Heart left ventricle (tissue), 16 donors: ENCODE measurements at regions of chr20 and their contacts with region 1.

Region 1: DNA sequence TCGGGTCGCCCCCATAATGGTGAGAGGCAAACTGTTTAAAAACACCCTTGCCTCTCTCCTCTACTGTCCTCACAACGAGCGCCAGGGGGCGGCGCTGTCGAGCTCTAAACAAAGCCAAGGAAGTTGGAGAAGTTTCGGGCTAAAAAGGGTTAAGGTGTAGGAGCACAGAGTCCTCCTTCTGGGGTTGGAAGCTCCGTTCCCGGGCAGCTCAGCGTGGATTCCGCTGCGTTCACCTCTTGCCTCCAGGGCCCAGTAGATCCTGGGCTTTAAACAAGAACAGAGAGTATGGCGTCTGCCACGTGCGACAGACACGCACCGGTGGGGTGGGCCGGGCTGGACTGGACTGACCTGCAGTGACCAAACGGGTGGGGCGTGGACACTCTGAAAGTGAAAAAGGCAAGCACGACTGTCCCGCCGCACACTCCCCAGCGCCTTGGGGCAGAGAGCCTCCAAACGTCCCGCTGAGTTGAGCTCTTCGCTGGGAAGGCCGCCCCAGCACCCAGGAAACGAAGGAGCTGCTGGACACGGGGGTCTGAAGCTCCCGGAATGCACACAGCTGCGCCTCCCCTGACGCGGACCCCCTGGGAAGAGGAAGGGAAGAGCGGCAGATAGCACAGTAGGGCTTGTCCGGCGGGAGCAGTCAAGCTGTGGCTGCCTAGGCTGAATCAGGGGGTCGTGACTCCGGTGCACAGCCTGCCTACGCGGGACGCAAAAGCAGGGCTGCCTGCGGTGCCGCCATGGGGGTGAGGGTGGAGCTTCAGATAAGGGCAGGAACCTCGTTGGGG is 1.6 kb upstream of the THBD start:
- DNase-seq: peak; percentile 79 to 91 (median 88)
- ATAC-seq: peak; percentile 52 to 74 (median 61)
- H3K4me3 ChIP-seq: peak overlapping the region; percentile 50 to 88 (median 69)
- H3K27ac ChIP-seq: peak overlapping the region; percentile 74 to 97 (median 90)
- H3K4me1 ChIP-seq: peaks cover 0 to 55% (median 27%) of the 10 kb centered on the region in 12 donors
- H3K27me3 ChIP-seq: peaks cover 0 to 48% (median 12%) of the 10 kb centered on the region in 9 donors
- CTCF ChIP-seq: peak; percentile 60 to 86 (median 76)
- POLR2A ChIP-seq: no peak

Region 2: GRCh38 chr20:22700367-22700766 is 350.7 kb before region 1 on chr20:
- intact Hi-C with region 1: loop called in 1 of 10 experiments (anchors 5 kb)
- DNase-seq: no peak
- ATAC-seq: no peak
- H3K4me3 ChIP-seq: no peak overlapping the region
- H3K27ac ChIP-seq: no peak overlapping the region
- H3K4me1 ChIP-seq: peaks cover 0 to 15% (median under 1%) of the 10 kb centered on the region in 12 donors
- H3K27me3 ChIP-seq: no peaks in the 10 kb centered on the region
- CTCF ChIP-seq: no peak
- POLR2A ChIP-seq: no peak

Region 3: GRCh38 chr20:22861229-22861980 is 189.6 kb before region 1 on chr20:
- intact Hi-C with region 1: loop called in 7 of 10 experiments (anchors 1 to 10 kb)
- DNase-seq: no peak
- ATAC-seq: no peak
- H3K4me3 ChIP-seq: no peak overlapping the region
- H3K27ac ChIP-seq: peak overlapping the region in 11 of 12 donors; percentile 24 to 87 (median 63)
- H3K4me1 ChIP-seq: peaks cover 0 to 20% (median 4%) of the 10 kb centered on the region in 12 donors
- H3K27me3 ChIP-seq: no peaks in the 10 kb centered on the region
- CTCF ChIP-seq: no peak
- POLR2A ChIP-seq: no peak

Region 4: GRCh38 chr20:23086056-23086566 is 35.1 kb after region 1 on chr20 and contains the start of gene CD93:
- intact Hi-C with region 1: loop called in 3 of 10 experiments (anchors 2 kb)
- DNase-seq: peak; percentile 64 to 78 (median 76)
- ATAC-seq: peak; percentile 59 to 83 (median 74)
- H3K4me3 ChIP-seq: peak within 1 kb of the TSS; percentile 27 to 70 (median 60)
- H3K27ac ChIP-seq: peak within 1 kb of the TSS; percentile 81 to 99 (median 97)
- H3K4me1 ChIP-seq: peaks cover 0 to 54% (median 25%) of the 10 kb centered on the region in 12 donors
- H3K27me3 ChIP-seq: no peaks in the 10 kb centered on the region
- CTCF ChIP-seq: no peak
- POLR2A ChIP-seq: peak in 1 of 2 donors; percentile 53
- total RNA-seq, gene CD93: 29.6 to 110 (median 45.7) TPM

Region 5: DNA sequence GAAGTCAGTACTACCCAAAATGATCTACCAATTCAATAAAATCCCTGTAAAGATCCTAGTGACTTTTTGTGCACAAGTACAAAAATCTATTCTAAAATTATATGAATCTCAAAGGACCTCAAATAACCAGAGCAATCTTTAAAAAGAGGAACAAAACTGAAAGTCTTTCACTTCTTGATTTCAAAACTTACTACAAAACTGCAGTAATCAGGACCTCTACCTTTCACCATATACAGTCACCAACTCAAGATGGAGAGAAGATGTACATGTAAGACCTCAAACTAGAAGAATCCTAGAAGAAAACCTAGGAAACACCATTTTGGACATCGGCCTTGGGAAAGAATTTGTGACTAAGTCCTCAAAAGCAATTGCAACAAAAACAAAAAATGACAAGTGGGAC is 144.6 kb after region 1 on chr20:
- intact Hi-C with region 1: loop called in 5 of 10 experiments (anchors 5 to 10 kb)
- DNase-seq: no peak
- ATAC-seq: no peak
- H3K4me3 ChIP-seq: no peak overlapping the region
- H3K27ac ChIP-seq: no peak overlapping the region
- H3K4me1 ChIP-seq: peaks cover 0 to 20% (median 0%) of the 10 kb centered on the region in 12 donors
- H3K27me3 ChIP-seq: no peaks in the 10 kb centered on the region
- CTCF ChIP-seq: no peak
- POLR2A ChIP-seq: no peak

Region 6: GRCh38 chr20:23245553-23246181 is 194.6 kb after region 1 on chr20:
- intact Hi-C with region 1: loop called in 1 of 10 experiments (anchors 5 kb)
- DNase-seq: peak; percentile 67 to 80 (median 71)
- ATAC-seq: peak; percentile 40 to 83 (median 79)
- H3K4me3 ChIP-seq: no peak overlapping the region
- H3K27ac ChIP-seq: peak overlapping the region in 10 of 12 donors; percentile 23 to 75 (median 66)
- H3K4me1 ChIP-seq: peaks cover 0 to 37% (median 18%) of the 10 kb centered on the region in 12 donors
- H3K27me3 ChIP-seq: no peaks in the 10 kb centered on the region
- CTCF ChIP-seq: peak; percentile 42 to 69 (median 48)
- POLR2A ChIP-seq: no peak

Region 7: GRCh38 chr20:23350196-23350903 is 299.3 kb after region 1 on chr20 and contains the start of gene NXT1:
- intact Hi-C with region 1: loop called in 3 of 10 experiments (anchors 10 kb)
- DNase-seq: peak; percentile 97 to 98 (median 97)
- ATAC-seq: peak; percentile 93 to 96 (median 94)
- H3K4me3 ChIP-seq: peak within 1 kb of the TSS; percentile 63 to 98 (median 90)
- H3K27ac ChIP-seq: peak within 1 kb of the TSS; percentile 93 to 100 (median 98)
- H3K4me1 ChIP-seq: peaks cover 4 to 27% (median 18%) of the 10 kb centered on the region in 12 donors
- H3K27me3 ChIP-seq: no peaks in the 10 kb centered on the region
- CTCF ChIP-seq: no peak
- POLR2A ChIP-seq: peak; percentile 53 to 77
- total RNA-seq, gene NXT1: 4.2 to 13.8 (median 9.1) TPM